ENCODE measurements at regions of chr3 and their contacts with region 1.

Region 1: DNA sequence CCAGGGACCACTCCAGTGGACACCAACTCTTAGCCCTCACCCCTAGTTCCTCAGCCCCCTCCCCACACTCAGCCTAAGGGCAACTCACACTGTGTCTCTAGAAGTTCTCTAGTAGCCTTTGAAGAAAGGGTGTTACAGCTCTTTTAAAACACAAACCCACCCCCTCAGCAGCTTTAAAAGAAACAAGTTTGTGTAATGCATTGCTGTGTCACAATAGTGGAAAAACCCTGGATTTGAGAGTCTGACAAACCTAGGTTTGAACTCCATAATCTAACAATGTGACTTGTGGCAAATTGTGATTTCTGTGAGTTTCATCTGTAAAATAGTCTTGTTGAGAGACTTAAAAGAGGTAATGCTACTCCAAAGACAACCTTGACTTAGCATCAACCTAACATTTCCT is 54.0 kb downstream of the PLCH1 start:
- DNase-seq: no peak
- ATAC-seq: no peak
- H3K4me3 ChIP-seq: no peak overlapping the region
- H3K27ac ChIP-seq: no peak overlapping the region
- H3K4me1 ChIP-seq: no peaks in the 10 kb centered on the region
- H3K27me3 ChIP-seq: no peaks in the 10 kb centered on the region
- CTCF ChIP-seq: no peak

Region 2: GRCh38 chr3:154981201-154981600 is 709.7 kb before region 1 on chr3:
- intact Hi-C with region 1: no loop called
- DNase-seq: no peak
- ATAC-seq: no peak
- H3K4me3 ChIP-seq: no peak overlapping the region
- H3K27ac ChIP-seq: no peak overlapping the region
- H3K4me1 ChIP-seq: peaks cover 0 to 5% (median 0%) of the 10 kb centered on the region in 3 donors
- H3K27me3 ChIP-seq: no peaks in the 10 kb centered on the region
- CTCF ChIP-seq: no peak

Region 3: DNA sequence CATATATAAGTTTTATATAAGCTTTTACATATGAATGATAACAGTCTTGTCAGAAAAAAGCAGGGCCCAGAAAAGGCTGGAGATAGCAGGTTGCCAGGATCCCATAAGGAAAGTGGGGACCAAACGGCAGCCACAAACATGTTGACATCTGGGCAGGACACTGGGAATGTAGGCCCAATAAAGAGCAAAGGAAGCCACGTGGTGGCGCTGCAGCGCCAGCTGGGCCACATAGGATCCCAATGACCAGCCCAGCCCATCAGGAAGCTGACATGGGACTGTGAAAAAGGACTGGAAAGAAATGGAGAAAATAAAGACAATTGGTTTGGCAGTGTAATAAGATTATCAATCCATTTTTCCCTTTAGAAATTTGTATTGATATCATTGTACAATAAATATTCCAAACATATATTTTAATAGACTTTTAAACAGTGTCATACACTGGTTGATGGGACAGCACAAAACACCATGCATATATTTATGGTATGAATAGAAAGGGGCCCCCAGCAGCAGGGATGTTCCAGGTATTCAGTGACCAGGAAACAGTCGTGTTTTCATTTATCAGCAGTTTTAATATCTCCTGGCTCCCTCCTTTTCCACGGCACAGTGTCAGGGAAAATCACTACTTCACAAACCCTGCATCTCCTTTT is 308.4 kb before region 1 on chr3:
- intact Hi-C with region 1: loop called in 1 of 3 experiments (anchors 10 kb)
- DNase-seq: peak; percentile 54 to 88 (median 76)
- ATAC-seq: peak; percentile 92 to 99 (median 97)
- H3K4me3 ChIP-seq: no peak overlapping the region
- H3K27ac ChIP-seq: no peak overlapping the region
- H3K4me1 ChIP-seq: no peaks in the 10 kb centered on the region
- H3K27me3 ChIP-seq: no peaks in the 10 kb centered on the region
- CTCF ChIP-seq: peak; percentile 20 to 49 (median 42)

Measured in pancreas (tissue), 10 donors.